PC-9 (cell line): ENCODE measurements at regions of chr3 and their contacts with region 1.

Region 1: DNA sequence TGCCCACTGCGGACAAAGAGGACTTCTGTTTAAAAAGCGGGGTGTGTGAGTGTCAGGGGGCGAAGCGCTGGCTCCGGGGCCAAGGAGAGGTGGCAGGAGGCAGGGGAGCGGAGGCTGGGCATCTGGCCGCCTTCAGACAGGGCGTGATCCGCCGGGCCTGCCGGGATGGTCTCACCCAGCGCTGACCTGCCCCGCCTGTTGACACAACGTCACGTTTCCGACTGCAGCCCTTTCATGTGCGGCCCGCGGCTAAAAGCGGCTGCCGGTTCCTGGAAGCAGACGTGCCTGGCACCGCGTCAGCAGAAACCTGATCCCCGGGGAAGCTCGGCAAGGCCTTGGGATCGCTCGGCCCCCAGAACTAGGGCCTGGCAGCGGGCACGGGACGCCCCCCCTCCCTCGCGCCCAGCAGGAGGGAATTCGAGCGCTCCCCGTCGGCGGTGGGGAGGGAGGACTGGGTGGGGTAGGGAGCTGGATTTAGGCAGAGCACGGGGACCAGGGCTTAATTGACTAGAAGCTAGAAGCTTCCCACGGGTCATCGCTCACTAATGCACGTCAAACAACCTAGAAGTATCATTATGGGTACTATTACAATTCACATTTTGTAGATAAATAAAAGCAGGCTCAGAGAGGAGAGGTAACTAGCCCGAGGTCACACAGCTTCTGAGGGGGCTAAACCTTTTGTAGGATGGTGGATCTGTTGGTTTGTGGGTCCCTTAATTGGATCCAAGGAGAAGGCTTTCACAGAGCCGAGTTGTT is 7.7 kb downstream of the BHLHE40 start:
- DNase-seq: peak; percentile 86 to 98
- H3K4me3 ChIP-seq: peak overlapping the region; percentile 52; the same call in 1 of the 2 replicates
- H3K27ac ChIP-seq: peak overlapping the region; percentile 89
- H3K4me1 ChIP-seq: peaks cover 48% of the 10 kb centered on the region
- H3K27me3 ChIP-seq: no peaks in the 10 kb centered on the region
- CTCF ChIP-seq: no peak

Region 2: GRCh38 chr3:4741404-4742307 is 245.3 kb before region 1 on chr3:
- CTCF ChIA-PET with region 1: interaction called, 11 read pairs
- POLR2A ChIA-PET with region 1: no interaction called
- intact Hi-C with region 1: no loop called
- DNase-seq: peak; percentile 67 to 85
- H3K4me3 ChIP-seq: no peak overlapping the region
- H3K27ac ChIP-seq: peak overlapping the region; percentile 81
- H3K4me1 ChIP-seq: peaks cover 48% of the 10 kb centered on the region
- H3K27me3 ChIP-seq: no peaks in the 10 kb centered on the region
- CTCF ChIP-seq: no peak

Region 3: GRCh38 chr3:5016218-5017161 is 29.5 kb after region 1 on chr3:
- CTCF ChIA-PET with region 1: no interaction called
- POLR2A ChIA-PET with region 1: interaction called, 9 read pairs
- intact Hi-C with region 1: loop called (anchors 1 kb)
- DNase-seq: peak; percentile 67 to 87
- H3K4me3 ChIP-seq: no peak overlapping the region
- H3K27ac ChIP-seq: peak overlapping the region; percentile 63
- H3K4me1 ChIP-seq: peaks cover 64% of the 10 kb centered on the region
- H3K27me3 ChIP-seq: no peaks in the 10 kb centered on the region
- CTCF ChIP-seq: no peak

Region 4: GRCh38 chr3:5026331-5027218 is 39.6 kb after region 1 on chr3:
- CTCF ChIA-PET with region 1: interaction called, 13 read pairs
- POLR2A ChIA-PET with region 1: interaction called, 9 read pairs
- intact Hi-C with region 1: loop called (anchors 1 kb)
- DNase-seq: peak; percentile 64 to 87
- H3K4me3 ChIP-seq: peak overlapping the region; percentile 48; the same call in 1 of the 2 replicates
- H3K27ac ChIP-seq: peak overlapping the region; percentile 73
- H3K4me1 ChIP-seq: peaks cover 33% of the 10 kb centered on the region
- H3K27me3 ChIP-seq: no peaks in the 10 kb centered on the region
- CTCF ChIP-seq: peak; percentile 61

Region 5: GRCh38 chr3:5122030-5122740 is 135.2 kb after region 1 on chr3 and contains the start of gene ARL8B:
- CTCF ChIA-PET with region 1: no interaction called
- POLR2A ChIA-PET with region 1: no interaction called
- intact Hi-C with region 1: no loop called
- DNase-seq: peak; percentile 58 to 90
- H3K4me3 ChIP-seq: peak within 1 kb of the TSS; percentile 76
- H3K27ac ChIP-seq: peak within 1 kb of the TSS; percentile 85
- H3K4me1 ChIP-seq: peaks cover 26% of the 10 kb centered on the region
- H3K27me3 ChIP-seq: no peaks in the 10 kb centered on the region
- CTCF ChIP-seq: peak; percentile 72
- total RNA-seq, gene ARL8B: 45.4 and 49.5 TPM in 2 replicates